Activated B cell treated with CpG ODN at 0.5 μM for 24 hours (primary cell): ENCODE measurements at regions of chr2 and their contacts with region 1.

Region 1: GRCh38 chr2:163191372-163191771 is 352.8 kb upstream of the KCNH7 start:
- DNase-seq: no peak
- ATAC-seq: no peak
- H3K4me3 Mint-ChIP-seq: no peak overlapping the region
- H3K27ac Mint-ChIP-seq: no peak overlapping the region
- H3K4me1 Mint-ChIP-seq: no peaks in the 10 kb centered on the region
- H3K27me3 Mint-ChIP-seq: no peaks in the 10 kb centered on the region
- CTCF ChIP-seq: no peak

Region 2: DNA sequence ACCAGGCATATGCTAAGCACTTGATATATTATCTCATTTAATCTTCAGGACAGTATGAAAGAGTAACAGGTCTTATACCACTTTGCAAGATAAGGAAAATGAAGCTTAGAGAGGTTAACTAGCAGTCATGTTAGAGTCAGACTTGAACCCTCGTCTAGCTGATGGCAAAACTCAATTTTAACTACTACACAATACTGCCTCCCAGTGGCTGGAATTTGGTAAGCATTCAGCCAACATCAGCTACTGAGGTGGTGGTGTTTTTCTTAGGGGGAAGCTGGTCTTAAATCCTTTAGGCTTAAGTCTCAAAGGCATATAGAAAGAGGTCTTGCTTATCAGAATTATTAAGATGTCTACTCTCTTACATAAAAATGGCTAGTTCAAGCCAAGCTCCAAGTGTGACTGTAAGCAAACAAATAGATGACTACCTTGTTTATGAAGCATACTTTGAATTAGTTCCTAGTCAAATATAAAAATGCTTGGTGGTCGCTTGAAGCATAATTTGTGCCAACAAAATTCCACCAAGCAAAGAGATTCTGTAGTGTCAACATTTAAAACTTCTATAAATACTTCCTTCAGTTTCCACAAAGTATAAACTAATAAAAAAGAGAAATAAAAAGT is 869.9 kb after region 1 on chr2:
- CTCF ChIA-PET with region 1: interaction called, 3 read pairs
- POLR2A ChIA-PET with region 1: no interaction called
- intact Hi-C with region 1: loop called (anchors 1 kb)
- DNase-seq: no peak
- ATAC-seq: no peak
- H3K4me3 Mint-ChIP-seq: no peak overlapping the region
- H3K27ac Mint-ChIP-seq: no peak overlapping the region
- H3K4me1 Mint-ChIP-seq: no peaks in the 10 kb centered on the region
- H3K27me3 Mint-ChIP-seq: no peaks in the 10 kb centered on the region
- CTCF ChIP-seq: no peak

Region 3: DNA sequence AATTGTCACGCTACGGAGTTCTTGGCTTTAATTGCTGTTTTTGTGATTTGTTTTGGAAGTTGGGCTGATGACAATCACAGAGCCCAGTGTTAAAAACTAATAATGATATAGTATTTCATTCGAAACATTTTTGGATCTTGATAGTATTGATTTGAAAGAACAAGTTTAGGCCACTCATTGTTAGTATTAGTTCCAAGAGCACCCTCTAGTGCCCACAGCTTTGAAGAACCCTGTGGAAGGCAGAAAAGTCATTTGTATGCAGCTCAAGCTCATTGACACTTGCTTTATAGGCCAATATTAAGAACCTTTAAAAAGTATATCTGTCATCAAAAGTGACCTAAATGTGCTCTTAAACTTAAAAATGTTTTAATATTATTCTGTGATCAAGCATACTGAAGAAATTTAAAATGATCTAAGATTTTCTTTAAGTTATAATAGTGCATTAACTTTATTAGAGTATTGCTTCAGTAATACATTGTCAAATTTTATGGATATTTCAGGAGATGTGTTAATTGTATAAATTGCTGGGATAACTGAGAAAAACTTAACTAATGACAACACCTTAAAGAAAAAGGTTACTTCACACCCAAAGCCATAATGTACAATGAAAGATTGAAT is 1238.9 kb after region 1 on chr2:
- CTCF ChIA-PET with region 1: no interaction called
- POLR2A ChIA-PET with region 1: no interaction called
- intact Hi-C with region 1: loop called (anchors 2 kb)
- DNase-seq: no peak
- ATAC-seq: no peak
- H3K4me3 Mint-ChIP-seq: no peak overlapping the region
- H3K27ac Mint-ChIP-seq: no peak overlapping the region
- H3K4me1 Mint-ChIP-seq: no peaks in the 10 kb centered on the region
- H3K27me3 Mint-ChIP-seq: no peaks in the 10 kb centered on the region
- CTCF ChIP-seq: no peak

Region 4: DNA sequence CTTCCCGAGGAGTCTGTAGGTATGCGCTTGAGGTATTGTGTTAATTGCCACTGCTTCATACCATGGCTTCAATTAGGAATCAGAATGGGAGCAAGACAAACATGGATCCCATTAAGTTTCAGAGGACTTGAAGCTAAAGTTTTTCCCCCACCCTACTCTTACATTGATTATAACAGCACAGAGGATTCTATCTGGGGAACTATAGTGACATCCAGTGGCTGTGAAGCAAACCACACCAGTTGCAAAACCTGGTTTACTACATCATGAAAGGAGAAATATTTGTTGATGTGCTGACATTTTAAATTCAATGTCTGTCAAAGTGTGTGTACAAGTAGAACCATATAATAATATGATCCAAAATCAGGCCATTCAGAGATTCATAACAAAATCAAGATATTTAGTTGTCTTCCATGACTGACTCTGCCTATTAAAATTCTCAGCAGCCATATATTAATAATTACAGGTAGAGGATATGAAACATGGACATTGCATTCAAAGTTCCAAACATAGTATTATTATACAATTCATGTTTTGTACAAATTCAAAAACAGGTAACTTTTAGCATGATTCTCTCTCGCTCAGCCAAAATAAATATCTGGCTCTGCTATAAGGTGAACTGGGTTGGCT is 1347.0 kb after region 1 on chr2:
- CTCF ChIA-PET with region 1: no interaction called
- POLR2A ChIA-PET with region 1: no interaction called
- intact Hi-C with region 1: loop called (anchors 2 kb)
- DNase-seq: no peak
- ATAC-seq: no peak
- H3K4me3 Mint-ChIP-seq: no peak overlapping the region
- H3K27ac Mint-ChIP-seq: no peak overlapping the region
- H3K4me1 Mint-ChIP-seq: no peaks in the 10 kb centered on the region
- H3K27me3 Mint-ChIP-seq: peaks cover 2% of the 10 kb centered on the region
- CTCF ChIP-seq: no peak